BJ (cell line): ENCODE measurements at regions of chr6 and their contacts with region 1.

Region 1: DNA sequence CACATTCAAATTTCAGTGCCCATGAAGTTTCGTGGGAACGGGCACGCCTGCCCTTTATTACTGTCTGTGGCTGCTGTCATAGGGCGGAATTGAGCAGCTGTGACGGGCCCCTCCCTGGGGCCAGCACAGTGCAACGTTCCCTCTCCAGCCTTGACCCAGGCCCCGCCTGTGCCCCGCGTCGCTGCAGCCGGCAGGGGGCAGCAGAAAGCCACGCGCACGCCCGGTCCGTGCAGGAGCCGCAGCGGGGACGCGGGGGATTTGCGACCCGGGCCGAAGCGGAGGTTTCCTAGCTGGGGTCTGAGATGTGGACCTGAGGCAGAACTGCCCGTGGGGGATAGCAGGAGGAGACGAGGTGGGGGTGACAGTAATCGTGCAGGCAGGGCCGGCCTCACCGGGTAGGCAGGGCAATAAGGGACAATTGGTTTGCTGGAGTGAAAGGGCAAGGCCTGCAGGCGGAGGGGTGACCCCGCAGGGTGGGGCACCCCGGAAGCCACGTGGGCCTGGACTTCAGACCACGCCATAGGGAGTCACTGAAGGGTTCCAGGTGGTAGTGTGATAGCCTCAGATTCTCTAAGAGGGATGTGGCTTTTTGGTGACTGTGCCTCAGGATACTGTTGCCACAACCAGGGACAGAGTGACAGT is 54.4 kb downstream of the SYTL3 start:
- DNase-seq: no peak
- H3K4me3 ChIP-seq: peak overlapping the region; percentile 47
- H3K27me3 ChIP-seq: no peaks in the 10 kb centered on the region
- CTCF ChIP-seq: peak; percentile 92

Region 2: DNA sequence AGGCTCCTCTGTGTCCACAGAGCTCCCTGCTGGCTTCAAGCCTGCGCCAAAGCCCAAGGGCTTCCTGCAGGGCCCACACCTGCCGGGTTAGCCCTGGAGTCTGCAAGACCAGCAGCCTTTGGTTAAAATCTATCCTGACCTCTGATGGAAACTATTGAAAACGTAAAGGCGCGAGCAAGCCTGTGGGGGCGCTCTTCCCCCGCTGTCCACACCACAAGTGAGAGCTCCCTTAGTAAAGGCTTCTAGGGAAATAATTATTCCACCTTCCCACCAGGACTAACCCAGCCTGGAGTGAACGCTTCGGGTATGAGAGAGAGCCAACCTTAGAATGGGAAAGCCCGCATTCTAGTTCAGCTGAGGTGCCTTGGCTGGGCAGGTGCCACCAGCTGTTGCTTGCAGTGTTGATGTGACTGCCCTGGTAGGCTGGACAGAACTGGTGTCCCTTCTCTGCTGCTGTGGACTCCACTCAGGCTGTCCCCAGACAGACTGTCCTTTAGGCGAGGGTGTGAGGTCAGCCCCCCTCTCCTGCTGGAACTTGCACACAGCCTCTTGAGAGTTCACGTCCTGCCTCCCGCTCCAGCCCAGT is 14.3 kb after region 1 on chr6:
- CTCF ChIA-PET with region 1: interaction called, 21 read pairs
- POLR2A ChIA-PET with region 1: no interaction called
- DNase-seq: no peak
- H3K4me3 ChIP-seq: no peak overlapping the region
- H3K27me3 ChIP-seq: no peaks in the 10 kb centered on the region
- CTCF ChIP-seq: peak; percentile 49

Region 3: DNA sequence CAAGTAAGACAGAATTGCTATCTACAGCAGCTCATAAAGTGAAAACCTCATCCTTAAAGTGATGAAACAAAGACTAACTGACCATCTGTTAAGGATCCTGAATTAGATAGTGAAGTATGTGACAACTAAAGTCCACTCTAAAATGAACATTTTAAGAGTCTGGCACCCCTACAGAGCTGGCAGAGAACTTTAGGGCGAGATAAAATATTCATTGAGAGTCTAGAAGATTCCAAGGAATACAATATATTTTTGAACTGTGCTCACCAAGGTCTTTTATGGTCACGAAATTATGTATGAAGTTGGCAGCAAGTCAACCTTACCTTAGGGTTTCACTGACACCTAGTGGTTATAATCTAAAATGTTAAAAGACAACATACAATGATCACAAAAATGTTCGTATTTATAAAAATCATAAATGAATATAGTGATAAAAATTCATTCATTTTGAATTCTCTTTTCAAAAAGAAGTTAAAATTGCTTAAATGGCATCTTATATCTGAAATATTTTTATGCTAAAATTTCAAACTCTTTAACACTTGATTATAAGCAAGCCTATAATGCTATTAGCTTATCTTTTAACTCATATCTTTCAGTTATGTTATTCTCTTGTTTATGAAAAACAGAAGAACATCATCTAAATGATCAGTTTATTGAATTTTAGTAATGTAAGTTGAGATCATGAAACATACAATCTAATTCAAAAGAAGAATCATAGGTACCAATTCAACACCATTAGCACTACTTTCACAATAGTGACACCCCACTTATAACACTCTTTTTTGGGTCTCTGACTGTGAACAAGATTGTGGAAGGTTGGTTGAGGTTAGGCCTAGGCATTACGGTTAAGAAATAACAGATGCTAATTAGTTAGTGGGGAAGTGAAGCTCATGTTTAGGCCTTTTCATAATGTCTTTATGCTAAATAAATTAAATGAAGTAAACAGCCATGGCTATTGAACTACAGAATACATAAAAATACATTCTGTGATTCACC is 268.2 kb after region 1 on chr6:
- CTCF ChIA-PET with region 1: interaction called, 86 read pairs
- POLR2A ChIA-PET with region 1: no interaction called
- DNase-seq: peak; percentile 4
- H3K4me3 ChIP-seq: no peak overlapping the region
- H3K27me3 ChIP-seq: no peaks in the 10 kb centered on the region
- CTCF ChIP-seq: peak; percentile 38